ENCODE measurements at regions of chr16 and their contacts with region 1.

Region 1: DNA sequence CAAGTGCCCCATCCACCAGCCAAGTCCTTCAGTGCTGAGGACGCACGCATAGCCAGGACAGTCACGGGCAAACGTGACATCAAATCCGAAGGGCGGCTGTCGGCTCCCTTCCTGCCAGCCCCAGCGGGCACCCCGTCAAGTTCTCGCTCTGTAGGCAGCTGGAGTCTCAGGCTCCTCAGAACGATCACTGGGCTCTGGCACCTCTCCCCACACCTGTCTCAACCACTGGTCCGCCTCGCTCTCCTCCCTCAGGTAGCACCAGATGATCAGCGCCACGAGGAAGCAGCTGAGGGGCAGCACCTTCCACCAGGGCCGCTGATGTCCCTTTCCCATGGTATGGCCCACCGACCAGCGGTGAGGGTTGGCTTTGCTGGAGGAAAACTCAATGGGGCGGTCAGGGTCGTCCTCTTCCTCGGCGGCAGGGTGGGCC is 421 bp downstream of the UQCC4 start:
- H3K4me3 ChIP-seq: peak overlapping the region; percentile 75
- H3K27ac ChIP-seq: peak overlapping the region; percentile 60; the same call in 1 of the 2 replicates
- H3K4me1 ChIP-seq: peaks cover 3% of the 10 kb centered on the region; the same call in 1 of the 2 replicates
- CTCF ChIP-seq: no peak; the same call in 1 of the 2 replicates

Region 2: DNA sequence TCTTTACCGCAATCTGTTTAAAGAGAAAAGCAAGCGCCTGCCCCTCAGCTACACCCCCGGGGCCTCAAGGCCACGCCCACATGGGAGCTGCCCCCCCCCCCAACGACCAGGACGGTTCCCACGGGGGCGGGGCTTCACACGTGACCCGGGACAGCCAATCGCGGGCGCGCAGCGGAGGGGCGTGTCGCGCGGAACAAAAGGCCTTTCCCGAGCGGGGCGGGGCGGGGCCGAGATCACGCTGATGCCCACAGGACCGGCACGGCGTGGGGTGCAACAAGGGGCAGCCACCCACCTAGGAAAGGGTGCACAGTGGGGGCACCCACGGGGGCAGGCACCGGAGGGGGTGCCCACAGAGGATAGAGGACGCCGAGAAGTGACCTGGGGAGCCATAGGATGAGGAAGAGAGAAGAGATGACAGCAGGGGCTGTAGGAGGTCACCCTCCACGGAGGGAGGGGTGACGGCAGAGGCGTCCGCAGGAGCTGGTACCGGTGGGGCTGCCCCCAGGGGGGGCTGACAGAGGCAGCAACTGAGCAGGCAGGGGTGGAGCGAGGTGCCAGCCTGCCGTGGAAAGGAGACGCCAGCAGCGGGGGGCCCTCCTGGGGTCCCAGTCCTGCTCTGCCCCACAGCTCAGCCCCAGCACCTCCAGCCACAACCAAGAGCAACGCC is 11.8 kb before region 1 on chr16:
- CTCF ChIA-PET with region 1: no interaction called
- POLR2A ChIA-PET with region 1: interaction called, 10 read pairs
- H3K4me3 ChIP-seq: peak overlapping the region; percentile 48
- H3K27ac ChIP-seq: no peak overlapping the region
- H3K4me1 ChIP-seq: peaks cover 3% of the 10 kb centered on the region
- CTCF ChIP-seq: no peak

Measured in HEK293 (cell line).